ENCODE measurements at regions of chr17 and their contacts with region 1.

Region 1: GRCh38 chr17:27601069-27601975 is 29.7 kb upstream of the LGALS9 start:
- DNase-seq: peak; percentile 71 to 93 (median 84)
- H3K4me3 ChIP-seq: no peak overlapping the region
- H3K27ac ChIP-seq: peak overlapping the region in 2 of 5 donors; percentile 6 to 13
- H3K4me1 ChIP-seq: peaks cover 0 to 11% of the 10 kb centered on the region in 2 donors
- H3K27me3 ChIP-seq: no peaks in the 10 kb centered on the region
- CTCF ChIP-seq: peak; percentile 91 to 94 (median 93)
- POLR2A ChIP-seq: no peak

Region 2: GRCh38 chr17:27236717-27237315 is 364.5 kb before region 1 on chr17:
- intact Hi-C with region 1: loop called (anchors 5 to 10 kb)
- DNase-seq: peak; percentile 58 to 95 (median 84)
- H3K4me3 ChIP-seq: no peak overlapping the region
- H3K27ac ChIP-seq: no peak overlapping the region
- H3K4me1 ChIP-seq: no peaks in the 10 kb centered on the region
- H3K27me3 ChIP-seq: no peaks in the 10 kb centered on the region
- CTCF ChIP-seq: peak; percentile 87 to 95 (median 92)
- POLR2A ChIP-seq: no peak

Region 3: GRCh38 chr17:27353461-27354050 is 247.8 kb before region 1 on chr17:
- intact Hi-C with region 1: loop called (anchors 5 to 10 kb)
- DNase-seq: peak; percentile 94 to 96 (median 94)
- H3K4me3 ChIP-seq: peak overlapping the region in 2 of 4 donors; percentile 50 to 57
- H3K27ac ChIP-seq: peak overlapping the region; percentile 7 to 92 (median 88)
- H3K4me1 ChIP-seq: peaks cover 2 to 21% of the 10 kb centered on the region in 2 donors
- H3K27me3 ChIP-seq: no peaks in the 10 kb centered on the region
- CTCF ChIP-seq: peak; percentile 18 to 100 (median 72)
- POLR2A ChIP-seq: peak; percentile 86 to 92

Region 4: GRCh38 chr17:27381007-27381501 is 220.3 kb before region 1 on chr17:
- intact Hi-C with region 1: loop called in 1 of 2 experiments (anchors 10 kb)
- DNase-seq: peak; percentile 61 to 89 (median 79)
- H3K4me3 ChIP-seq: no peak overlapping the region
- H3K27ac ChIP-seq: no peak overlapping the region
- H3K4me1 ChIP-seq: peaks cover 8 to 13% of the 10 kb centered on the region in 2 donors
- H3K27me3 ChIP-seq: no peaks in the 10 kb centered on the region
- CTCF ChIP-seq: peak; percentile 83 to 98 (median 92)
- POLR2A ChIP-seq: no peak

Region 5: DNA sequence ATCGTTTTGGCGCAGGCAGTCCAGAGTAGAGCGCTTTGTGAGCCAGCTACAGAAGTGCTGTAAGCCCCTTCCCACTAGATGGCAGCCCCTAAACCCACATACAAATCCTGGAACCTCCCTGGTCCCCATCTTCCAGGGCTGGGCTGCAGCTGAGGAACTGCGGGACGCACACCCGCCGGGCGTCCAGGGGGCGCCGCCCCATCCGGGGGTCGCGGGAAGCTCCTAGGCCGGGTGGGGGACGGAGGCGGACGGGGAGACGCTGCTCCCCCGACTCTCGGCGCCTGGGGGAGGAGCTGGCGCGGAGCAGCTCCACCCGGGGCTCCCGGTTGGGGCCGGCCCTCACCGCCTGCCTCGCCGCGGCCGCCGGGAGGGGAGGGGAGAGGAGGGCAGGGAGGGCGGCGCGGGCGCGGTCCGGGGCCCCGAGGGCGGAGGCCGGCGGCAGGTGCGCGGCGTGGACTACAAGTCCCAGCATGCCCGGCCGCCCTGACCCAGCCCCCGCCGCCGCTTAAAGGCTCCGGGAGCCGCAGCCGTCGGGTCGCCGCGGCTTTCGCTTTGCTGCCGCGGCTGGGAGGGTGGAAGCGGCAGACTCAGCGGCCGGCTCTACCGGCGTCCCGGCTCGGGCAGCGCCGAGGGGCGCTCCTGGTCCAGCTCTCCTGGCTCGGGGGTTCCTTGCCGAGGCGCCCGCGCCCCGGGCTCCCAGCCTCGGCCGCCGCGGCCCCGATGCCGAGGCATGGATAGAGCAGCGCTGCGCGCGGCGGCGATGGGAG is 145.2 kb before region 1 on chr17 and contains the start of gene KSR1:
- intact Hi-C with region 1: loop called (anchors 2 to 10 kb)
- DNase-seq: peak; percentile 76 to 89 (median 87)
- H3K4me3 ChIP-seq: peak within 1 kb of the TSS; percentile 71 to 91 (median 87)
- H3K27ac ChIP-seq: peak within 1 kb of the TSS; percentile 59 to 84 (median 82)
- H3K4me1 ChIP-seq: peaks cover 9 to 32% of the 10 kb centered on the region in 2 donors
- H3K27me3 ChIP-seq: no peaks in the 10 kb centered on the region
- CTCF ChIP-seq: peak in 5 of 6 experiments; percentile 20 to 45 (median 36)
- POLR2A ChIP-seq: peak; percentile 79 to 87
- total RNA-seq, gene KSR1: 16.0 to 50.4 (median 37.8) TPM

Region 6: GRCh38 chr17:27552469-27552779 is 48.9 kb before region 1 on chr17:
- intact Hi-C with region 1: no loop called
- DNase-seq: peak in 2 of 7 donors; percentile 47 to 73
- H3K4me3 ChIP-seq: no peak overlapping the region
- H3K27ac ChIP-seq: no peak overlapping the region
- H3K4me1 ChIP-seq: peaks cover 9 to 35% of the 10 kb centered on the region in 2 donors
- H3K27me3 ChIP-seq: no peaks in the 10 kb centered on the region
- CTCF ChIP-seq: no peak
- POLR2A ChIP-seq: no peak

Region 7: DNA sequence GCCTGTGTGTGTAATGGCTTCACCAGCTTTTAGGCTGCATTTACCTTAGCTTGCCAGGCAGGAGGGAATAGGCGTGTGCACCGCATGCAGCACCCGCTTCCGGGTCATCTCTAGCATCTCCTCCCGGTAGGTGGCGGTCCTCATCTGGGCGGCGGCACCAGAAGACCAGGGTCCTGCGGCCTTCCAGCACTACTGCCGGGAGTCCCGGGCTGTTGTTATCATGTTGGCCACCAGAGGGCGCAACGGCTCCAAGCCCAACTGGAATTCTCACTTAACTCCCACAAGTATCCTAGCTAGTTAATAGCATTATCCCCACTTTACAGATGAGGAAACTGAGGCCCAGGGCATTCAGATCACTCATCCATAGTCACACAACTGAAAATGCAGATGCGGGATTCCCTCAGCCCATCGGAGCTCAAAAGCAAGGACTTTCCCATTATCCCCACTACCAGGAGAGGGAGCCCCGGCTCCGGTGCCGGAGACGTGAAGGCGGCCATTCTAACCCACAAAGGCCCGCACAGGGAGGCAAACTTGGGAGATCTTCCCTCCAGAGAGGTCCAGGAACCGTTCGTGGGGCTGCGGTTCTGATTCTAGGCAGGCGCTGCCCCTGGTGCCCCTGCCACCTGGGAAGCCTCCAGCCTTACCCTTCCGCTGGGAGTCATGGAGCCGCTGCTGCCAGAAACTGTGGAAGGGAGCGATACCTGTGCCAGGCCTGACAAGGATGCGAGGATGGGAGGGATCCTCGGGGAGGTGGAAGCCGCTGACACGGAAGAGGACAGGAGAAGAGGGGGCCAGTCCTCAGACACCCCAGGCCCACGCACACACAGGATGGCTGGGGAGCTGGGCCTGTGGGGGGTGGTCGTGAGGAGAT is 53.6 kb after region 1 on chr17:
- intact Hi-C with region 1: loop called in 1 of 2 experiments (anchors 2 kb)
- DNase-seq: peak; percentile 67 to 91 (median 77)
- H3K4me3 ChIP-seq: no peak overlapping the region
- H3K27ac ChIP-seq: no peak overlapping the region
- H3K4me1 ChIP-seq: no peaks in the 10 kb centered on the region
- H3K27me3 ChIP-seq: no peaks in the 10 kb centered on the region
- CTCF ChIP-seq: peak; percentile 93 to 98 (median 97)
- POLR2A ChIP-seq: no peak